ENCODE measurements at regions of chr4 and their contacts with region 1.

Region 1: GRCh38 chr4:102500696-102501446 is at the start of gene NFKB1:
- DNase-seq: peak; percentile 78
- H3K4me3 Mint-ChIP-seq: peak within 1 kb of the TSS; percentile 89
- H3K27ac Mint-ChIP-seq: peak within 1 kb of the TSS; percentile 87
- H3K4me1 Mint-ChIP-seq: peaks cover 26% of the 10 kb centered on the region
- H3K27me3 Mint-ChIP-seq: peaks cover 3% of the 10 kb centered on the region
- total RNA-seq, gene NFKB1: 84.7 to 88.1 TPM

Region 2: GRCh38 chr4:102344954-102345794 is 155.7 kb before region 1 on chr4 and contains the start of gene SLC39A8:
- CTCF ChIA-PET with region 1: no interaction called
- POLR2A ChIA-PET with region 1: interaction called, 20 read pairs
- DNase-seq: peak; percentile 91
- H3K4me3 Mint-ChIP-seq: peak within 1 kb of the TSS; percentile 78
- H3K27ac Mint-ChIP-seq: peak within 1 kb of the TSS; percentile 92
- H3K4me1 Mint-ChIP-seq: peaks cover 44% of the 10 kb centered on the region
- H3K27me3 Mint-ChIP-seq: peaks cover 7% of the 10 kb centered on the region
- total RNA-seq, gene SLC39A8: 101 to 103 TPM

Region 3: GRCh38 chr4:102518703-102519131 is 17.8 kb after region 1 on chr4:
- CTCF ChIA-PET with region 1: no interaction called
- POLR2A ChIA-PET with region 1: interaction called, 20 read pairs
- DNase-seq: no peak
- H3K4me3 Mint-ChIP-seq: no peak overlapping the region
- H3K27ac Mint-ChIP-seq: no peak overlapping the region
- H3K4me1 Mint-ChIP-seq: peaks cover 54% of the 10 kb centered on the region
- H3K27me3 Mint-ChIP-seq: no peaks in the 10 kb centered on the region

Region 4: GRCh38 chr4:102525097-102525496 is 24.2 kb after region 1 on chr4:
- CTCF ChIA-PET with region 1: interaction called, 3 read pairs
- POLR2A ChIA-PET with region 1: interaction called, 23 read pairs
- DNase-seq: no peak
- H3K4me3 Mint-ChIP-seq: no peak overlapping the region
- H3K27ac Mint-ChIP-seq: no peak overlapping the region
- H3K4me1 Mint-ChIP-seq: peaks cover 72% of the 10 kb centered on the region
- H3K27me3 Mint-ChIP-seq: no peaks in the 10 kb centered on the region

Region 5: GRCh38 chr4:102586644-102587021 is 85.8 kb after region 1 on chr4:
- CTCF ChIA-PET with region 1: interaction called, 4 read pairs
- POLR2A ChIA-PET with region 1: interaction called, 13 read pairs
- DNase-seq: peak; percentile 70
- H3K4me3 Mint-ChIP-seq: peak overlapping the region; percentile 50
- H3K27ac Mint-ChIP-seq: peak overlapping the region; percentile 81
- H3K4me1 Mint-ChIP-seq: peaks cover 87% of the 10 kb centered on the region
- H3K27me3 Mint-ChIP-seq: no peaks in the 10 kb centered on the region

Region 6: DNA sequence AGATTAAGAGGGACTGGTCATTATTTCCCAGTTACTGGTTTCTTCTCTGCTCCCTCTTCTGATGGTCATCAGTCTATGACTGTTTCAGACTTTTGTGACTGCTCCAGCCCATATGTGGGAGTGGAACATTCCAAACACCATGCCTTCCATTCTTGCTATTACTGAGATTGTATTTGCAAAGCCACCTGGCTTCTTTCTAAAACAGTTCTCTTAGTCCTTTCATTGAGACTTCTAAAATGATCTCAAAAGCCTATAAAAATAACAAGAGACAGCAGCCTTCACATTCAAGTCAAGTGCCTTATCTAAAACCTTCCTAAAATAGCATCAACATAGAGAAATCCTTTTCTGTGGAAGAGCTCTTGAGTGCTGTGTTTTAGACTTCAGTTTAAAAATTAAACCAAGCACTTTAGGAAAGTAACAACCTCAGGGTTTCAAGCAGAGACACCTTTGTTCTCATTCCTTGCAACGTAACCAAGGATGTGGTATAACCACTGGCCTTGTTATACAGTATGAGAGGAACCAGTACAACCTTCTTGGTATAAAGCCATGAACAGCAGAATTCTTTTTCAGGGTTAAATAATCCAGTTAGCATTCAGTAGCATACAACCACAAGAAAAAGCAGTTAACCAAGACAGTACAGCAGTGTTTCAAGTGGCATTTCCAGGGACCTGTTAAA is 97.4 kb after region 1 on chr4:
- CTCF ChIA-PET with region 1: interaction called, 4 read pairs
- POLR2A ChIA-PET with region 1: interaction called, 11 read pairs
- DNase-seq: no peak
- H3K4me3 Mint-ChIP-seq: peak overlapping the region; percentile 43
- H3K27ac Mint-ChIP-seq: peak overlapping the region; percentile 92
- H3K4me1 Mint-ChIP-seq: peaks cover 73% of the 10 kb centered on the region
- H3K27me3 Mint-ChIP-seq: no peaks in the 10 kb centered on the region

Measured in activated CD4-positive, alpha-beta memory T cell treated with anti-CD3 and anti-CD28 coated beads, Interleukin-2, amount 10 ng/mL, durations not matched to agents 7 days and 5 days (primary cell).